BJ (cell line): ENCODE measurements at regions of chr5 and their contacts with region 1.

Region 1: DNA sequence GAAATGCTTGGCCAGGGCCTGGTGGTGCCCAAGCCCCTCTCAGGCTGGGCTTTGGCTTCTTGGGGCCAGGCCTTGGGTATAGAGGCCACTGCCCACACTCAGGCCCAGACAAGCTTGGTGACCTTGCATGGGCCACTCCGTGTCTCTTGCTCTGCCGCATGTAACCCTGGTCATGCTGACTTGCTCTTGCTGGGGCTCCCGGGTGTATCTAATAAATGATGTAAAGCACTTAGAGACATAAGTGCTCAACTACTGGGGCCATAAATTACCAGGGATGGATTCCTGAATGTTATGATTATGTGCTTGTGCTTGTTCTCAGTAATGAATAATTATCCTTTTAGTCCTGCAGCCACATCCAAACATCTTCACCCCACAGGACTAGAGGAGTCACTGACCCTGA is 54.0 kb downstream of the C5orf15 start:
- DNase-seq: no peak
- H3K4me3 ChIP-seq: no peak overlapping the region
- H3K27me3 ChIP-seq: peaks cover 6% of the 10 kb centered on the region
- CTCF ChIP-seq: no peak

Region 2: DNA sequence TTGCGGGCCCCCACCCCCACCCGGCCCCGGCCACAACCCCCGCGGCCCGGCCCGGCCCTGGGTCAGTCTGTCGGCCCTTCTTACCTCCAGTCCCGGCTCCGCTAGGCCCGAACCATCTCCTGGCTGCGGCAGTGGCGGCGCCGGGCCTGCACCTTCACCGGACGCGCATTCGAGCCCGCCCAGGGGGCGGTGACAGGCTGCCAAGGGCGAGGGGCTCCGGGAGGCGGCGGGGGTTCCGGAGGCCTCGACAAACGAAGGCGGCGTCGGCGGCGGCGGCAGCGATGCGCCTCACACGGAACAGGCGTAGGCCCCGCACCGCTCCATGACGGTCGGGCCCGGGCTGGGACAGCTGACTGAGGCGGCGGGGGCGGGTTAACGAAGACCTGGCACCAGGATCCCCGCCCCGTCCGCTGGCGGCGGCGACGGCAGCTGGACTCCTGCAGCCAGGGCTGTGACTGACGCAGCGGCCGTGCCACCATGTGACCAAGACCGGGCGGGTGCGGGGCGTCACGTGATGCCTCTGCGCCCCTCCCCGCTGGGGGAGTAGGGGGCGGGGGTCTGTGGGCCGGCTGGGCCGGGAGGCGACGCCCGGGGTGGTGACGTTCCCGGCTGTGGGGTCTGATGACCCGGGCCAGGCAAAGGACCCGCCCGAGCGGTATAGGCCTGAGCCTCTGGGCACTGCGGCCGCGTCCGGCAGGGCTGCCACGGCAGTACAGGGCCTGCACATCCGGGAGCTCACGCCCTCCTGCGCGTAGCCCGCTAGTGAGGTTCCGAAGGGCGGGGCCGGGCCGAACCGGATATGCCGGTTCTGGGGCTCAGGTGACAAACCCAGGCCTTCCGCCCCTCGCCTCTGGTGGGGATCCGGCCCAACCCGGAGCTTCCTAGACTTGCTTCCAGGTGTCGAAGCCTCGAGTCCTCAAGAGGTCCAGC is 951.0 kb before region 1 on chr5 and contains the start of gene AFF4:
- CTCF ChIA-PET with region 1: no interaction called
- POLR2A ChIA-PET with region 1: interaction called, 11 read pairs
- DNase-seq: peak; percentile 71
- H3K4me3 ChIP-seq: peak within 1 kb of the TSS; percentile 97
- H3K27me3 ChIP-seq: no peaks in the 10 kb centered on the region
- CTCF ChIP-seq: no peak
- polyA plus RNA-seq, gene AFF4: 42.5 and 44.2 TPM in 2 replicates